Transverse colon (tissue), 4 donors: ENCODE measurements at regions of chr9 and their contacts with region 1.

Region 1: DNA sequence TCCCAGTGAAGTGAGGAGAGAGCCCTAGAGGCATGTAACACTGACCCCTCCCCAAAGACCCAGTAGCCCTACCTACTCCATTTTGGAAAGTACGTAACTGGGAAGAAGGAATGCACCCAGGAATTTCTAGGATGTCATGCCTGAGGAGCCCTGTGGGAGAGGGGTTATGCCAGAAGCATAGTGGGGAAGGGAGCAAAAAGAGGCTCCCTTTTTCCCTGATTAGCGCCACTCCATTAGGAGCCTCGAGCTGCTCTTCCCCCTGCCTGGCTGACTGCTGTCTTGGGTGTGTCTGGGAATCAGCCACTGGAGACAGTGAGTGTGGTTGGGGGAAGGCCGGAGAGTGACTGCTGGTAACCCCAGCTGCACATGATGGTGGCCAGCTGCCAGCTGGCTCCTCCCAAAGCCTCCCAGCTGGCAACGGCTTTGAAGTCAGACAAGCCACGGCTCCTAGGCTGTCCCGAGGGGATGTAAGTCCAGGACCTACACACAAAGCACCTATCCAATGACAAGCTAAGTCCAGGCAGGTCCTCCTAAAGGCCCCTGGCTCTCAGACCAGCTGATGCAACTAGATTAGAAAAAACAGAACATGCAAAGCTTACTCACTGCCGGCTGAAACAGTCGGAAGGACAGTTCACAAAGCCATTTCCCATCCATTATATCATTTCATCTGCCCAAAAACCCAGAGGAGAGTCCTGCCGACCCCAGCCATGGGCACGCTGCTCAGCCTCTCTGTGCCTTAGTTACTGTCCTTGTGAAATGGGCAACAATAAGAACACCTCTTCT is 136.6 kb upstream of the ABCA1 start:
- DNase-seq: peak; percentile 93
- H3K4me3 ChIP-seq: peak overlapping the region in 1 of 4 donors; percentile 5
- H3K27ac ChIP-seq: peak overlapping the region; percentile 80 to 88 (median 86)
- H3K4me1 ChIP-seq: peaks cover 23 to 32% (median 26%) of the 10 kb centered on the region in 4 donors
- H3K27me3 ChIP-seq: no peaks in the 10 kb centered on the region
- CTCF ChIP-seq: peak in 1 of 5 experiments; percentile 32
- EP300 ChIP-seq: peak; percentile 73
- POLR2A ChIP-seq: peak; percentile 59

Region 2: GRCh38 chr9:104009826-104010225 is 1054.7 kb before region 1 on chr9:
- in situ Hi-C with region 1: no loop called
- intact Hi-C with region 1: no loop called
- DNase-seq: no peak
- H3K4me3 ChIP-seq: no peak overlapping the region
- H3K27ac ChIP-seq: no peak overlapping the region
- H3K4me1 ChIP-seq: no peaks in the 10 kb centered on the region
- H3K27me3 ChIP-seq: no peaks in the 10 kb centered on the region
- CTCF ChIP-seq: no peak
- EP300 ChIP-seq: no peak
- POLR2A ChIP-seq: no peak

Region 3: DNA sequence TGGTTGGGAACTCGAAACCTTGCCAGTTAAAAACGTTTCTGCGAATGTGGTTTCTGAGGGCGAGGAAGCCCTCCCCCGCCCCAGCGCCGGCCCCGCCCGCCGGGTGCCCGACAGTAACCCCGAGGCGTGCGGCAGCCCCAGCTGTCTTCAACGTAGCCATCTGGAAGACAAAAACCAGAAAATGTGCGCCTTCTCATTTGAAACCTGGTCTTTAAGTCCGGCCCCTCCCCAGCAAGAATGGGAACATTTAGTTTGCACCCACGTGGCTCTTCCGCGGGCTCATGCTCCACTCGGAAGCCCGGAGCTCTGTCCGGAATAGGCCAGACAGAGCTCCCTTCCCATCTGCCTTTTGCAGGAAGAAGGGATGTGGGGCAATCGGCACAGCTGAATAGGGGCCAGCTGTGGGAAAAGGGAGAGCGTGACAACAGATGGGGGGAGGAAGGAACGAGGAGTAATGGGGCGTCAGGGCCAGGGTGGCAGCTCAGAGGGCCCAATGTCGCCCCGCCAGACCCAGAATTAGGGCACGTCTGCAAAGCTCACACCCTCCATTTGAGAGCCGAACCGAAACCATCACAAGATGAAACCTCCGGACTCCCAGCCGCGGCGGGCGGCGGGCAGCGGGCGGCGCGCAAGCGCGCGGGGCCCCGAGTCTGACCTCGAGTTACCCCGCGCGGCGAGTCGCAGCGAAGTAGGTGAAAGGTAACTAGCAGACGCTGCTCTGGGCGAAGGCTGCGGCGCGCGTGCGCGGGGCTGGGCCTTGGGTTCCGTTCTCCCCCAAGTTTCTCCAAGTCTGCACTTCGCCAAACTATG is 73.2 kb before region 1 on chr9:
- in situ Hi-C with region 1: no loop called
- intact Hi-C with region 1: loop called (anchors 5 kb)
- DNase-seq: peak; percentile 95
- H3K4me3 ChIP-seq: peak overlapping the region; percentile 50 to 79 (median 61)
- H3K27ac ChIP-seq: peak overlapping the region; percentile 94 to 98 (median 97)
- H3K4me1 ChIP-seq: peaks cover 25 to 36% (median 33%) of the 10 kb centered on the region in 4 donors
- H3K27me3 ChIP-seq: no peaks in the 10 kb centered on the region
- CTCF ChIP-seq: no peak
- EP300 ChIP-seq: peak; percentile 70
- POLR2A ChIP-seq: peak; percentile 64

Region 4: DNA sequence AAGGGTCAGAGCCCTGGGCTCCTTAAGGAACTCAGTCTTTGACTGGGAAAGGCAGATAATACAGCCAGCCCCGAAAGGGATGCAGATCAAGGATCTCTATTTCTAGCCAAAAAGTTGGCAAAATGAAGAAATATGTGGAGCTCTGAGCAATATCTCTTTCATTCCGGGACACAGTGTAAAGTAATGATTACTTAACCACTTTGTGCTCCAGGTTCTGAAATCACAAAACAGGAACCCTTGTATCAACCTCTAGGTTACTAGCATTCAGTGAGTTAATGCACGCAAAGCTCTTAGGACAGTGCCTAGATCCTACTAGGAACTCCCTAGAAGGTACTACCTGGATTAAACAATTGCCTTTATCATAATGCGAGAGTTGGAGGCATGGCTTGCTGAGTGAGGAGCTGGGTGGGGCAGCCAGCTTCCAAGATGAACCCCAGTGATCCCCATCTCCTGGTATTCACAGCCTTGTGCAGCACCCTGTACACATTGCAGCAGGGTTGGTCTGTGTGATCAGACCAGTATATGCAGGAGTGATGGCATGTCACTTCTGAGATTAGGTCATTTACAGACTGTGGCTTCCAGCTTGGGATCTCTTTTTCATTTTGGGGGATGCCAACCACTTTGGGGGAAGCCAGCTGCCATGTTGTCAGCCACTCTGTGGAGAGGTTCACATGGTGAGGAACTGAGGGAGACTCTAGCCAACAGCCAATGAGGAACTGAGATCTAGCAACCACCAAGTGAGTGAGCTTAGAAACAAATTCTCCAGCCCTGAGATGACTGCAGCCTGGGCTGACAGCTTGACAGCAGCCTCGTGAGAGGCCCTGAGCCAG is 76.9 kb after region 1 on chr9:
- in situ Hi-C with region 1: no loop called
- intact Hi-C with region 1: loop called (anchors 10 kb)
- DNase-seq: no peak
- H3K4me3 ChIP-seq: no peak overlapping the region
- H3K27ac ChIP-seq: peak overlapping the region in 1 of 4 donors; percentile 30
- H3K4me1 ChIP-seq: peaks cover 0 to 18% (median 14%) of the 10 kb centered on the region in 4 donors
- H3K27me3 ChIP-seq: no peaks in the 10 kb centered on the region
- CTCF ChIP-seq: no peak
- EP300 ChIP-seq: no peak
- POLR2A ChIP-seq: no peak

Region 5: DNA sequence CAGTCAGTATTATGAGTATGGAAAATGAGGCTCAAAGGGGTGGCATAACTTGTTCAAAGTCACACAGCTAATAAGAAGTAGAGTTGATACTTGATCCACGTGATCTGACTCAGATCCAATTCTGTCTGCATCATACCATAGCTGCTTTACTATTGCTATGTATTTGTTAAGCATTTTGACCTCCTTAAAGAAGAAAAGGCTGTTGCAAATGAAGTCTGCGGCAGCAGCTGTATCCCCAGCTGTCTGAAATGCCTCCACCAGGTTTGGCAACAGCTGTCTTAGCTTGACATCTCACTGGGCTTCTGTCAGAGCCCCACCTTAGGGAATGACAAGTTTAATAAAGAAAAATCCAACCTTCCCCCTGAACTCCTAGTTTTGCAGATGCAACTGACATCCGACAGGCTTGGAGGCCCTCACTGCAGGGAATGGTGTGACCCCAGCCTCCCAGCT is 104.4 kb after region 1 on chr9:
- in situ Hi-C with region 1: no loop called
- intact Hi-C with region 1: no loop called
- DNase-seq: no peak
- H3K4me3 ChIP-seq: no peak overlapping the region
- H3K27ac ChIP-seq: no peak overlapping the region
- H3K4me1 ChIP-seq: no peaks in the 10 kb centered on the region
- H3K27me3 ChIP-seq: no peaks in the 10 kb centered on the region
- CTCF ChIP-seq: no peak
- EP300 ChIP-seq: no peak
- POLR2A ChIP-seq: no peak